ENCODE measurements at regions of chr3 and their contacts with region 1.

Region 1: DNA sequence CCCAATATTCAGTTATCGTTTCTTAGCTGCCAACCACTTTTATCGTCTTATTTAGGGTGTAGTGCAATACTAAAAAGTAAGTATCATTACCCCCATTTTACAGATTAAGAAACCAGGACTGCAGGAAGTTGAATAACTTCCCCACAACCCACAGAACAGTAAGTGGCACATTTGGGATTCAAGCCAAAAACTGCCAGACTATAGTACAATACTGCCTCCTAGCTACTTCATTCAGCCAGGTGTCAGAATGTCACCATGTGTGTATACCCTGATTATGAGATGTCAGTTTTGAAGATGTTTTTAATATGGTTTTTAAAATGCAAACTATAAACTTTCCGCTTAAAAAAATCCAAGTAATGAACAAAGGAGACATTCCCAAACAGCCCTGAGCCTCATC is 74.2 kb upstream of the PROK2 start:
- DNase-seq: no peak
- H3K4me3 ChIP-seq: no peak overlapping the region
- H3K27ac ChIP-seq: no peak overlapping the region
- H3K4me1 ChIP-seq: no peaks in the 10 kb centered on the region
- H3K27me3 ChIP-seq: peaks cover 0 to 6% (median 0%) of the 10 kb centered on the region in 4 donors
- CTCF ChIP-seq: peak; percentile 44 to 51 (median 49)
- EP300 ChIP-seq: no peak
- POLR2A ChIP-seq: no peak

Region 2: GRCh38 chr3:71258116-71258515 is 601.0 kb before region 1 on chr3:
- intact Hi-C with region 1: no loop called
- DNase-seq: no peak
- H3K4me3 ChIP-seq: no peak overlapping the region
- H3K27ac ChIP-seq: peak overlapping the region; percentile 12 to 51 (median 28)
- H3K4me1 ChIP-seq: peaks cover 6 to 45% (median 43%) of the 10 kb centered on the region in 4 donors
- H3K27me3 ChIP-seq: no peaks in the 10 kb centered on the region
- CTCF ChIP-seq: no peak
- EP300 ChIP-seq: no peak
- POLR2A ChIP-seq: no peak

Region 3: GRCh38 chr3:71708476-71709105 is 150.5 kb before region 1 on chr3:
- intact Hi-C with region 1: loop called (anchors 5 kb)
- DNase-seq: no peak
- H3K4me3 ChIP-seq: no peak overlapping the region
- H3K27ac ChIP-seq: no peak overlapping the region
- H3K4me1 ChIP-seq: peaks cover 3 to 24% (median 19%) of the 10 kb centered on the region in 4 donors
- H3K27me3 ChIP-seq: no peaks in the 10 kb centered on the region
- CTCF ChIP-seq: no peak
- EP300 ChIP-seq: no peak
- POLR2A ChIP-seq: no peak